Psoas muscle (tissue), 8 donors: ENCODE measurements at regions of chr19 and their contacts with region 1.

Region 1: DNA sequence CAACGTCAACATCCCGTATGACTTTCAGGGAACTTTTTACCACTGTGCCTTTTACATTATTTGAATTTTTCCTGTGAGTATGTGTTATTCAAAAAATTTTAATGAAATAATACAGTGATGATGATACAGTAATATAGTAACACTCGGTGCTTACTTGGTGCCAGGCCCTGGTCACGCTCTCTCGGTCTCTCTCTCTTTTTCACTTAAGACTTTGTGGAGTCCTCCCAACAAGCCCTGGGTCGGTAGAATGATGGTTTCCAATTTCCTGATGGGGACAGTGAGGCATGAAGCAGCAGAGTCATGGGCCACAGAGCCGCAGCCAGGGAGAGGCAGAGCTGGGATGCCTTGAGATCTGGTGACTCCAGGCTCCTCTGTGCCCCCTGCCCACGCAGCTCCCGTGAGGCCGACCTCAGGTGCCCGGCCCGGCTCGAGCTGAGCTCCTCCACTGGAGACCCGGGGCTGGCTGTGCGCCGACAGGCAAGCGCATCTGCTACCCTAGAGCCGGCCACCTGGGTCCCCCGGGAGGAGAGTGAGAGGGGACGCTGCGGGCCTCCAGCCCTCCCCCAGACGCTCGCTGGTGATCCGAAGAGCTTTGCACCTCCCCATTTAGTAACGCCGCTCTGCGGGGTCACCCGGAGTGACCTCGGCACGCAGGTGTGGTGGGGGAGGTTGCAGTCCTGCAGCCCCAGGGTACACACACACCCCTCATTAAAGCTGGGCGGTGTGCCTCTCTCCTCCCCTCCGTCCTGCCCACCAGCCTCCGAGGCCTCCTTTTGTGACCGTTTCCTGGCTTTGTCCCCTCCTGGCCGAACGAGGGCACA is 4.4 kb upstream of the SBK3 start:
- DNase-seq: peak; percentile 58 to 91
- ATAC-seq: peak; percentile 41 to 64 (median 54)
- H3K4me3 ChIP-seq: peak overlapping the region; percentile 56
- H3K27ac ChIP-seq: peak overlapping the region; percentile 94
- H3K4me1 ChIP-seq: peaks cover 66% of the 10 kb centered on the region
- H3K27me3 ChIP-seq: no peaks in the 10 kb centered on the region
- CTCF ChIP-seq: peak; percentile 7

Region 2: DNA sequence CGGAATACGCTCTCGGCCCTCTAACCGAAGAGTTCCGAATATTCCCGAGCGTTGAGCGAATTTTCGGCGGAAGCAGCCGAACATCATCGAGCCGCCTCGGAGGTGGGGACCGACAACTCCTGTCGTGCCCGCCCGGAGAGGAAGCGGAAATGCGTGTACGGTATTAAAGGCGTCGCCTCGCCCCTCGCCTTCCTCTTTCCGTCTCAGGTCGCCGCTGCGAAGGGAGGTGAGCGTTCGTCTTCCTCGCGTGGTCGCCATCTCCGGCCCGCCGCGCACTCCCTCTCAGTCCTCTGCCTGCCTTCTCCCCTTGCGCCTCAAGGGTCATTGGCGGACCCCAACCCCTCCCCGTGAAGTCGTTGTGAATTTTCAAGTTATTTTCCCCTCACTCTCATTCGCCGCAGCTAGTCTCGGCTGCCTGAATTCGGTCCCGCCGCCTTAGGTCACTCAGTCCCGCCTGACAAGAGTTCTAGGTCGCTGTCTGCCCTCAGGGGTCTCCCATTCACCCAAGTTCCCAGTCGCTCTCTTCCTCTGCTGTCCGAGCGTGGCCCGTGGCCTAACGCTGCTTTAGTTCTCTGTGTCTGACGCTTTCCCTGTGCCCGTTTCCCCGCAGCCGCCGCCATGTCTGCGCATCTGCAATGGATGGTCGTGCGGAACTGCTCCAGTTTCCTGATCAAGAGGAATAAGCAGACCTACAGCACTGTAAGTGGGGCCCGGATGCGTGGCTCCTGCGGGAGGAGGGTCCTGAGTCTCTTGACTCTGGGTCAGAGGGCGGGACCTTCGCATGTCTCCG is 163.8 kb before region 1 on chr19 and contains the start of gene RPL28:
- intact Hi-C with region 1: no loop called
- DNase-seq: peak; percentile 97 to 99
- ATAC-seq: peak; percentile 90 to 91 (median 90)
- H3K4me3 ChIP-seq: peak within 1 kb of the TSS; percentile 81
- H3K27ac ChIP-seq: peak within 1 kb of the TSS; percentile 86
- H3K4me1 ChIP-seq: peaks cover 32% of the 10 kb centered on the region
- H3K27me3 ChIP-seq: no peaks in the 10 kb centered on the region
- CTCF ChIP-seq: no peak
- total RNA-seq, gene RPL28: 548 to 810 (median 665) TPM

Region 3: DNA sequence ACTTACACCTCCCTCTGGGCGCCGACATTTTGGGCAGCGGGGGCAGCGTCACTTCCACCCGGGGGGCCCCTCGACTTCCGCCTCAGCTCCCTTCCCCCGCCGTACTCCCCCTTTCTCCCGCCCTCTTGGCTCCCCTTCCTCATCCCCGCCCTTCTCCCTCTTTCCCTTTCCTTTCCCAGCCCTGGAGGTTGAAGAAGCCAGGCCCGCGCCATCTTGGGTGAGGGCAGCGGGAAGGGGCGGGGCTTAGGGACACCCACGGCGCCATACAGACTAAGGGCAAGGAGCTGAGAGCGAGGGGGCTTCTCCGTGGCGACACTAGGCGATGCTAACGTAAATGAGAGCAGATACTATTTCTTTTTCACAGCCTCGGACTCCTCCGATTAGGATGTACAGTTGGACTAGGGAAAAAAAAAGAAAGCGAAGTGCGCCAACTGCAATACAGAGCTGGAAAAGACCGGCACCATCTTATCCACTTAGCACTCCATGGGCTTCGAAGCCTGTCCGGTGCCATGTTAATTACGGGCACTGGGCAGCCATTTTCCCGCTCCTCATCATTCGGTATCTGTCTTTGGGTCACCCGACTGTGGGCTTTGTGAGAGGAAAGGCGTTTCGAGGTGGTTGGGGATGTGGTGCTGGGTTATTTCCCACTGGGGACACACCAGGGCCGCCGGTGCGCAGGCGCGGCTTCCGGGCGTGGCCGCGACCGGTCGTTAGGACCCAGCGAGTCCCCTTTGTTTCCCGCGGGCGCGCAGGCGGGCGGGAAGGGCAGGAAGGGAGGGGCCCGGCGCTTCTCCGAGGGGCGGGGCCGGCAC is 50.0 kb after region 1 on chr19 and contains the start of gene FIZ1:
- intact Hi-C with region 1: loop called in 1 of 2 experiments (anchors 5 kb)
- DNase-seq: peak; percentile 99
- ATAC-seq: peak; percentile 80 to 89 (median 83)
- H3K4me3 ChIP-seq: peak within 1 kb of the TSS; percentile 72
- H3K27ac ChIP-seq: peak within 1 kb of the TSS; percentile 98
- H3K4me1 ChIP-seq: peaks cover 26% of the 10 kb centered on the region
- H3K27me3 ChIP-seq: no peaks in the 10 kb centered on the region
- CTCF ChIP-seq: no peak
- total RNA-seq, gene FIZ1: 9.9 to 23.7 (median 13.2) TPM

Region 4: GRCh38 chr19:55674841-55675660 is 125.3 kb after region 1 on chr19 and contains the start of gene EPN1:
- intact Hi-C with region 1: no loop called
- DNase-seq: peak; percentile 97 to 99
- ATAC-seq: peak; percentile 94 to 96 (median 96)
- H3K4me3 ChIP-seq: peak within 1 kb of the TSS; percentile 90
- H3K27ac ChIP-seq: peak within 1 kb of the TSS; percentile 95
- H3K4me1 ChIP-seq: peaks cover 30% of the 10 kb centered on the region
- H3K27me3 ChIP-seq: no peaks in the 10 kb centered on the region
- CTCF ChIP-seq: no peak
- total RNA-seq, gene EPN1: 113 to 134 (median 125) TPM